ENCODE measurements at regions of chr12 and their contacts with region 1.

Region 1: GRCh38 chr12:10304161-10304574 is 3.5 kb upstream of the KLRD1 start:
- DNase-seq: peak; percentile 18
- H3K4me3 Mint-ChIP-seq: no peak overlapping the region
- H3K27ac Mint-ChIP-seq: peak overlapping the region; percentile 34
- H3K4me1 Mint-ChIP-seq: peaks cover 49% of the 10 kb centered on the region
- H3K27me3 Mint-ChIP-seq: peaks cover 7% of the 10 kb centered on the region

Region 2: DNA sequence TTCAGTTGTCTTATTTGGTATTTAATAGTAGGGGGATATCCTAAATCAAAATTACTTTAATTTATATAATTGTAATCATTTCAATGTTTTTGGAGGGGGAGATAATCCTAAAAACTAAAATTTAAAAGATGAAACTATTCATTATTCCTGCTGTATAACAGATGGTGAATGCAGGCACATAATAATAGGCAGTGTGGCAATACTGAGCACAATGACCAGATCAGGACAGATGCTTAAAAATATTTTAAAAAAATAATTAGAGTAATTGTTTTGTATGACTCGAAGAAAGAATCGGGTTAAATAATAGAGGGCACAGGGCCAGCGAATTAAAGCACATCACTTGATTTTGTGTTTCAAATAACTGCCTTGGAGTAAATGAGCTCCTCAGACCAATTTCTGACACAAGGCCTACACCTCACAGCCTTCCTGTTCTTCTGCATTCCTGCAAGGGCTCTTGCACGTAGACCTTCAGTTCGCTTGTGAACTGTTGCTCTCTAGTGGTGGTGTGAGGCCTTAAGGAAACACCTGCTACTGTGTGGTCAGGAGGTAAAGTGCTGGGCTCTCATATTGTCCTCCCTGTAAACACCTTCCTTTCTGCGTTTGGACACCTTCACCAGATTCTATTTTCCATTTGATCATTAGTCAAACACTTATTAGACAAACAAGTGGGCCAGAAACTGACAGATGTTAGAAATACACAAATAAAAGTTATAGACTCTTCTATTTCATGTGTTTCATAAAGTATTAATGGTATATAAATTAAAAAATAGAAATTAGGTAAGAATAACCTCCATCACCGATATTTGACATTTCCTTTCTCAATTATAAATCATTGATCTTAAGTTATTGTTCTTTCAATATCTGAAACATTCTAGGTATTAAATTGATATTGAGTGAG is 506.2 kb before region 1 on chr12:
- intact Hi-C with region 1: loop called (anchors 10 kb)
- DNase-seq: peak; percentile 66
- H3K4me3 Mint-ChIP-seq: no peak overlapping the region
- H3K27ac Mint-ChIP-seq: peak overlapping the region; percentile 11
- H3K4me1 Mint-ChIP-seq: peaks cover 46% of the 10 kb centered on the region
- H3K27me3 Mint-ChIP-seq: peaks cover 3% of the 10 kb centered on the region

Region 3: GRCh38 chr12:10212201-10213131 is 91.7 kb before region 1 on chr12 and contains the start of gene GABARAPL1:
- intact Hi-C with region 1: loop called (anchors 1 kb)
- DNase-seq: peak; percentile 81
- H3K4me3 Mint-ChIP-seq: peak within 1 kb of the TSS; percentile 91
- H3K27ac Mint-ChIP-seq: peak within 1 kb of the TSS; percentile 93
- H3K4me1 Mint-ChIP-seq: peaks cover 30% of the 10 kb centered on the region
- H3K27me3 Mint-ChIP-seq: peaks cover 21% of the 10 kb centered on the region
- total RNA-seq, gene GABARAPL1: 4.0 and 5.2 TPM in 2 replicates

Region 4: GRCh38 chr12:10260927-10261326 is 43.2 kb before region 1 on chr12:
- intact Hi-C with region 1: no loop called
- DNase-seq: no peak
- H3K4me3 Mint-ChIP-seq: no peak overlapping the region
- H3K27ac Mint-ChIP-seq: no peak overlapping the region
- H3K4me1 Mint-ChIP-seq: no peaks in the 10 kb centered on the region
- H3K27me3 Mint-ChIP-seq: peaks cover 25% of the 10 kb centered on the region

Region 5: DNA sequence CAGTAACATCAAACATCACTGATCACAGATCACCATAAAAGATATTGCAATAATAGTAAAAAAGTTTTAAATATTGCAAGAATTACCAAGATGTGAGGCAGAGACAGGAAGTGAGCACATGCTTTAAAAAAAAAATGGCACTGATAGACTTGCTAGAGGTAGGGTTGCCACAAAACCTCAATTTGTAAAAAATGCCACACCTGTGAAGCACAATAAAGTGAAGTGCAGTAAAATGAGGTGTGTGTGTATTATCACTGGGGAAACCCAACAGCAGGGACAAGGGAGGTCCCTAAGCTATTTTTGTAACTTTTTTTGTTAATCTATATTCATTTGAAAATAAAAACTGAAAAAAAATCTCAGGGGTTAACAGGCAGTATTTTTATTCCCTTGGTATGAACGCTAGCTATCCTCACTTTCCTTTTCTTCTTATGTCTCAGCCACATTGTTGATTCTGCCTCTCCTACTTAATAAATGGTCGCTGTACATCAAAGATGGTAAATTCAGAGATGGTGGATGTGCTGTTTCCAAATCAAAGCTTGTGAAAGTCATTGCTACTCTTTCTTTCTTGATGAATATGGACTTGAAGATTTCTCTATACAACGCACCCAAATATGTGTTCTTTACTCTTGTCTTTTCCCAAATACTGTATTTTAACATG is 10.5 kb before region 1 on chr12:
- intact Hi-C with region 1: loop called (anchors 1 kb)
- DNase-seq: no peak
- H3K4me3 Mint-ChIP-seq: no peak overlapping the region
- H3K27ac Mint-ChIP-seq: peak overlapping the region; percentile 77
- H3K4me1 Mint-ChIP-seq: peaks cover 39% of the 10 kb centered on the region
- H3K27me3 Mint-ChIP-seq: no peaks in the 10 kb centered on the region

Region 6: DNA sequence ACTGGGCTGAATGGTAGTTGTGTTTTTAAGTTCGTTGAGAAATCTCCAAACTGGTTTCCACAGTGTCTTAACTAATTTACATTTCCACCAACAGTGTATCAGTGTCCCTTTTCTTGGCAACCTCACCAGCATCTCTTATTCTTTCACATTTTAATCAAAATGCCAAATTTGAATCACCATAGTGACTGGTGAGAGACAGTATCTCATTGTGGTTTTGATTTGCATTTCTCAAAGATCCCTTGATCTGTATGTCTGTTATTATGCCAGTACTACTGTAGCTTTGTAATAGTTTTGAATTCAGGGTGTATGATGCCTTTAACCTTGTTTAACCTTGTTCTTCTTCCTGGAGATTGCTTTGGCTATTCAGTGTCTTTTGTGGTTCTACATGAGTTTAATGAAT is 199.3 kb after region 1 on chr12:
- intact Hi-C with region 1: loop called (anchors 2 kb)
- DNase-seq: no peak
- H3K4me3 Mint-ChIP-seq: no peak overlapping the region
- H3K27ac Mint-ChIP-seq: no peak overlapping the region
- H3K4me1 Mint-ChIP-seq: peaks cover 12% of the 10 kb centered on the region
- H3K27me3 Mint-ChIP-seq: peaks cover 5% of the 10 kb centered on the region